H1 (cell line): ENCODE measurements at regions of chr5 and their contacts with region 1.

Region 1: DNA sequence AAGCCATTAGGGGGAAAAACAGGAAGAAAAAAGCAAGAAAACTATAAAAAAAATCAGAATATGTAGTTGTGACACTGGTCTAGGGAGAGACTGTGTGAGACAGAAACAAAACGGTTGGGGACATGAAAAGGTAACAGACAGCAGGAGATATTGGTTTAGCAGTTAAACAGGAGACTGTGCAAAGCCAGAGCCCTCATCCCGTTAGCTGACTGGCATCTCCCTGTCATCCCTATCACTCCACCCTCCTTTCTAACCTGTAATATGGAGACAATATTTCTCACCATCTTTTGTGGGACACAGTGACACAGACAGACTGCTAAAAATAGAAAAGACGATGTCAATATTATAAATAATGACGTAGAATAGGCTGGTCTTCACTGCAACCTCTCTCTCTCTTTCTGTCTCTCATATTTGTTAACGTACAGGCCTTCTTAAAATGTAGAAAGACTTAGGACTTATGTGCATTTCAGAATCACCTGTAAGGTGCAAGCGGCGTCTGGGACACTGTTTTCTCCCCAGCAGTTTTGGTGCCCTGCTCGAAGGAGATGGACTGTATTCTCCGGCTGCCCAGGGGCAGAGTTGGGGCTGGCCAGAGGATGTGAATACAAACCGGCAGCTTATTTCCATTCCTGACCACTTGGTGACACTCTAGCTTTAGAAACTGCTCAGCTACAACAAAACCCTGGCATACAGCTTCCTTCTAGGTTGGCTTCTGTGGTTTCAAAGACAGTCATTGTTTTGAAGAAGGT is 190.6 kb downstream of the MAT2B start:
- DNase-seq: peak; percentile 23 to 56
- H3K4me3 ChIP-seq: no peak overlapping the region
- H3K27ac ChIP-seq: no peak overlapping the region
- H3K4me1 ChIP-seq: peaks cover 0 to 3% (median 0%) of the 10 kb centered on the region in 4 experiments; a peak in 1 of 7 replicates
- H3K27me3 ChIP-seq: no peaks in the 10 kb centered on the region
- CTCF ChIP-seq: peak; percentile 40 to 91 (median 81)
- EP300 ChIP-seq: no peak
- POLR2A ChIP-seq: no peak
- RAD21 ChIP-seq: peak; percentile 99

Region 2: GRCh38 chr5:163564321-163564938 is 131.6 kb before region 1 on chr5:
- CTCF ChIA-PET with region 1: interaction called, 10 read pairs
- POLR2A ChIA-PET with region 1: no interaction called
- DNase-seq: peak in 1 of 2 experiments; percentile 83
- H3K4me3 ChIP-seq: peak overlapping the region in 1 of 4 experiments; percentile 36; a peak in 1 of 8 replicates
- H3K27ac ChIP-seq: no peak overlapping the region
- H3K4me1 ChIP-seq: peaks cover 8 to 25% (median 18%) of the 10 kb centered on the region in 4 experiments; a peak in 6 of 7 replicates
- H3K27me3 ChIP-seq: peaks cover 0 to 20% (median 14%) of the 10 kb centered on the region in 4 experiments; a peak in 4 of 7 replicates
- CTCF ChIP-seq: peak; percentile 10 to 83 (median 62)
- EP300 ChIP-seq: no peak
- POLR2A ChIP-seq: no peak
- RAD21 ChIP-seq: peak; percentile 91

Region 3: GRCh38 chr5:163712011-163712410 is 16.0 kb after region 1 on chr5:
- CTCF ChIA-PET with region 1: interaction called, 14 read pairs
- POLR2A ChIA-PET with region 1: no interaction called
- DNase-seq: no peak
- H3K4me3 ChIP-seq: no peak overlapping the region
- H3K27ac ChIP-seq: no peak overlapping the region
- H3K4me1 ChIP-seq: no peaks in the 10 kb centered on the region
- H3K27me3 ChIP-seq: no peaks in the 10 kb centered on the region
- CTCF ChIP-seq: no peak
- EP300 ChIP-seq: no peak
- POLR2A ChIP-seq: no peak
- RAD21 ChIP-seq: no peak

Region 4: GRCh38 chr5:163727028-163727427 is 31.0 kb after region 1 on chr5:
- CTCF ChIA-PET with region 1: no interaction called
- POLR2A ChIA-PET with region 1: no interaction called
- DNase-seq: no peak
- H3K4me3 ChIP-seq: no peak overlapping the region
- H3K27ac ChIP-seq: no peak overlapping the region
- H3K4me1 ChIP-seq: no peaks in the 10 kb centered on the region
- H3K27me3 ChIP-seq: no peaks in the 10 kb centered on the region
- CTCF ChIP-seq: no peak
- EP300 ChIP-seq: no peak
- POLR2A ChIP-seq: no peak
- RAD21 ChIP-seq: no peak